Activated CD4-positive, alpha-beta T cell treated with anti-CD3 and anti-CD28 coated beads, Interleukin-2, amount 10 ng/mL, durations not matched to agents 24 days and 14 days (primary cell): ENCODE measurements at regions of chr5 and their contacts with region 1.

Region 1: DNA sequence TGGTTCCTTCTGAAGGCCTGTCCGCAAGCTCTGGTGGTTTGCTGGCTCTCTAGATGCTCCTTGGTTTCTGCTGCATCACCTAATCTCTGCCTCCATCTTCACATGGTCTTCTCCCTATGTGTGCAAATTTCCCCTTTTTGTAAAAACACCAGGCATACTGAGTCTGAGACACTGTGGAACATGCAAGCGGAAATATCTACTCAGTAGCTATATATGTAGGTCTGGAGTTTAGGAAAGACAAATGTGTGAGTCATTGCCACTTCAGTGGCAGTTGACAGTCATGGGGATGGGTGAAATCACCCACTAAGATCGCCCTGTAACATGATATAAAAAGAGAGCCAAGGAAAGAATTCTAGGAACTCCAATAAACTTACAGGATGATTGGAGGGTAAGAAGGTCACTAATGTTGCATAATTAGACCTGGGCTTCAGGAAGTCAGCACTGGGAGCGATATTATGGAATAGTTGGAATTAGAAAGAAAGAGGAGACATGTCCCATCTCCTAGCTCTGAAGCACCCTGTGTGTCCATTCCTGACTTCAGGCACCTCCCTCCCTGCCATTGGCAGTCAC is 22.7 kb upstream of the UBLCP1 start:
- DNase-seq: no peak
- H3K4me3 Mint-ChIP-seq: no peak overlapping the region
- H3K27ac Mint-ChIP-seq: peak overlapping the region; percentile 59
- H3K4me1 Mint-ChIP-seq: peaks cover 20% of the 10 kb centered on the region
- H3K27me3 Mint-ChIP-seq: no peaks in the 10 kb centered on the region

Region 2: GRCh38 chr5:159163027-159163700 is 77.2 kb before region 1 on chr5:
- intact Hi-C with region 1: loop called (anchors 2 kb)
- DNase-seq: no peak
- H3K4me3 Mint-ChIP-seq: peak overlapping the region; percentile 6
- H3K27ac Mint-ChIP-seq: peak overlapping the region; percentile 74
- H3K4me1 Mint-ChIP-seq: peaks cover 43% of the 10 kb centered on the region
- H3K27me3 Mint-ChIP-seq: no peaks in the 10 kb centered on the region

Region 3: DNA sequence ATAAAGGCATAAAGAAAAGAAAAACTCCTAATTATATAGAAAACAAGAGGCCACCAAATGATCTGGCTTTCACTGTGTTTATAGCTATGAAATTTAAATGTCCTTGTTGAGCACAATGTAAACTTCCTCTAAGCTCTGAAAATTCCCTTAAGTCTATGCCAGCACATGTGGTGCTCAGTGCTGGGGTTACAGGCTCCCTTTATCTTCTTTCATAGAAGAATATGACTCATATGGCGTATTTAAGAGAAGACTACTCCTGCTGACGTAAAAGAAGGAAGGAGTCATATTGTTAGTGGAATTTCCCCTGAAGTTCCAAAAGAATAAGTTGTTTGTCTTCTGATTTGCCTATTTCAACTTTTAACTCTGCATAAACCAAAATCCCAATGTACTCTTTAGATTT is 61.4 kb before region 1 on chr5:
- intact Hi-C with region 1: loop called (anchors 1 kb)
- DNase-seq: no peak
- H3K4me3 Mint-ChIP-seq: peak overlapping the region; percentile 68
- H3K27ac Mint-ChIP-seq: peak overlapping the region; percentile 94
- H3K4me1 Mint-ChIP-seq: peaks cover 60% of the 10 kb centered on the region
- H3K27me3 Mint-ChIP-seq: no peaks in the 10 kb centered on the region

Region 4: GRCh38 chr5:159216454-159216853 is 23.9 kb before region 1 on chr5:
- intact Hi-C with region 1: loop called (anchors 1 kb)
- DNase-seq: no peak
- H3K4me3 Mint-ChIP-seq: peak overlapping the region; percentile 15
- H3K27ac Mint-ChIP-seq: peak overlapping the region; percentile 71
- H3K4me1 Mint-ChIP-seq: peaks cover 17% of the 10 kb centered on the region
- H3K27me3 Mint-ChIP-seq: peaks cover 2% of the 10 kb centered on the region

Region 5: DNA sequence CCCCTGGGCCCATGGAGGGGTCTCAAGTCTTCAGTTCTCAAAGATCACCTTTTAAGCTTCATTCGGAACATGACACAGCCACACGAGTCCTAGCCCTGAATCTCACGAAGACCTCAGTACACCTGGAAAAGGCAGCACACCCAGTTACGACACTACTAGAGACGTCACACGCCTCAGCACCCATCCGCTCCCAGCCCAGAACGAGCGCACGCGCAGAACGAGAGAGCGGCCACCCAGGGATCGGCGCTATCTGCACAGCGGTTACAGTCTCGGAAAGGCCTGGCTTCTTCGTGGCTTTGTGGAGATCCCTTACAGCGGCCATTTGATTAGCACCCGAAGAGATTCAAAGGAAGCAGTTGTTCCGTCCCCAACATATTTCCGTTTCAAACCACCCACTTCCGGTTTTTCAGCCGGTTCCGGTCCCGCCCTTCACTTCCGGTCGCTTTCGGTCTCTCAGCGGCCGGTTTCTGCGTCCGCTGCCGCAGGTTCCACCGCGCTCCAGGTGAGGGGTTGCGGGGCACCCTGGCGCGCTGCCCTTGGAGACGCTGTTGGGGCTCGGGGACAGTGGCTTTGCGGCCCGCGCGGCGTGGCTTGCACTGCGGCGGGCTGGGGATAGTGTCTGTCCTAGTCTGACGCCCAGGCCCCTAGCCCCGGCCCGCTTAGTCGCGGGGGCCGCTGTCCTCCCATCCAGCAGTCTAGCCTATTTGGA is 22.6 kb after region 1 on chr5 and contains the start of gene UBLCP1:
- intact Hi-C with region 1: loop called (anchors 2 kb)
- DNase-seq: peak; percentile 92
- H3K4me3 Mint-ChIP-seq: peak within 1 kb of the TSS; percentile 92
- H3K27ac Mint-ChIP-seq: peak within 1 kb of the TSS; percentile 97
- H3K4me1 Mint-ChIP-seq: peaks cover 24% of the 10 kb centered on the region
- H3K27me3 Mint-ChIP-seq: peaks cover 3% of the 10 kb centered on the region
- total RNA-seq, gene UBLCP1: 30.2 and 31.2 TPM in 2 replicates